ENCODE measurements at regions of chr17 and their contacts with region 1.

Region 1: GRCh38 chr17:49217651-49218413 is 7.3 kb downstream of the ABI3 start:
- DNase-seq: no peak
- H3K4me3 ChIP-seq: no peak overlapping the region
- H3K27ac ChIP-seq: no peak overlapping the region
- H3K4me1 ChIP-seq: peaks cover 0 to 9% (median 4%) of the 10 kb centered on the region in 4 experiments; a peak in 4 of 7 replicates
- H3K27me3 ChIP-seq: peaks cover 0 to 10% (median 4%) of the 10 kb centered on the region in 4 experiments; a peak in 5 of 7 replicates
- CTCF ChIP-seq: no peak
- EP300 ChIP-seq: no peak
- POLR2A ChIP-seq: no peak
- RAD21 ChIP-seq: no peak

Region 2: DNA sequence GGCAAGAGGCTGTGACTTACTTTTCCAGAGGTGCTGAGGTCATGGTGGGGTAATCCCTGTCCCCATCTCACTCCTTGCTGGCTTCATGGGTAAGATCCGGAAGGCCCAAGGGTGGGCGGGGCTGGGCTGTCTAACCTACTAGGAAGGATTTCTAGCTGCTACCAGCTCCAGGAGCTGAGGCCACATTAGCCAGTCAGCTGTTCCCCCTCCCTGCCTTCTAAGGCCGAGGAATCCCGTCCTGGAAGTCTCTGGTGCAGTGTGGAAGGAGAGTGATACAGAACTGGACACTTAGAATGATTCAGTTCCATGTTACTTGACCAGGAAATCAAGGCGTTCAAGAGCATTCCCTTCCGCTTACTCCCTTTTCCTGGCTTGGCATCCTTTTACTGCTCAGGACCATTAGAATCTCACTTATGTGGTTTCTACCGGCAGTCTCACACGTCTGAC is 16.3 kb before region 1 on chr17:
- CTCF ChIA-PET with region 1: interaction called, 11 read pairs
- POLR2A ChIA-PET with region 1: interaction called, 6 read pairs
- DNase-seq: no peak
- H3K4me3 ChIP-seq: no peak overlapping the region
- H3K27ac ChIP-seq: no peak overlapping the region
- H3K4me1 ChIP-seq: no peaks in the 10 kb centered on the region
- H3K27me3 ChIP-seq: no peaks in the 10 kb centered on the region; a peak in 1 of 7 replicates
- CTCF ChIP-seq: no peak
- EP300 ChIP-seq: no peak
- POLR2A ChIP-seq: no peak
- RAD21 ChIP-seq: no peak

Region 3: GRCh38 chr17:49365667-49366066 is 147.8 kb after region 1 on chr17:
- CTCF ChIA-PET with region 1: no interaction called
- POLR2A ChIA-PET with region 1: no interaction called
- DNase-seq: no peak
- H3K4me3 ChIP-seq: no peak overlapping the region
- H3K27ac ChIP-seq: no peak overlapping the region
- H3K4me1 ChIP-seq: peaks cover 5 to 15% (median 8%) of the 10 kb centered on the region in 4 experiments; a peak in 6 of 7 replicates
- H3K27me3 ChIP-seq: no peaks in the 10 kb centered on the region
- CTCF ChIP-seq: peak; percentile 58 to 83 (median 73)
- EP300 ChIP-seq: no peak
- POLR2A ChIP-seq: no peak
- RAD21 ChIP-seq: peak; percentile 27 to 53; a peak in 3 of 4 replicates